ENCODE measurements at regions of chr10 and their contacts with region 1.

Region 1: DNA sequence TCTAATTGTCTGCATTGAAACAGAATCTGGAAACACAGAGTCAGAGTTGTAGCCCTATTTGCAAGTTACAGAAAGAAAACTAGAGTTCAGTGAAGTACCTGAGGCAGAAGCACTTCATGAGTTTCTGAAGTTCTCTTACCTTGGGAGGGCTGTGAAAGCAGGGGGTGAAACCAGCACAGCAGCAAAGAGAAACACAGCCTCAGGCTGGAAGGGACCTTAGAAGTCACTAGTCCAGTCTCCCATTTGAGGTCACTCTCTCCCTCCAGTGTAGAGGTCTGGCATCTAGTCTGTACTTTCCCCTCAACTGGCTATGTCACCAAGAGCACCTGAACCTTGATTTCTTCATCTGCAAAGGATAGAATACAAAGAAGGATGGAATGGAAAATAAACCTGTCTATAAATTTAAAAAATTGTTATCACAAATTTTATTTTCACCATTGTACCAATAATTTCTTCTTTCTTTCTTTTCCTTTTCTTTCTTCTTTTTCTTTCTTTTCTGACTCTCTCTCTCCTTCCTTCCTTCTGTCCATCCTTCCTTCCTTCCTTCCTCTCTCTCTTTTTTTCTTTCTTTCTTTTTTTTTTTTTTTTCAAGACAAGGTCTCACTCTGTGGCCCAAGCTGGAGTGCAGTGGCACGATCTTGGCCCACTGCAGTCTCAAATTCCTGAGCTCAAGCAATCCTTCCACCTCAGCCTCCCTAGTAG is 36.5 kb upstream of the SORBS1 start:
- DNase-seq: no peak

Region 2: GRCh38 chr10:95208702-95209391 is 388.8 kb before region 1 on chr10:
- in situ Hi-C with region 1: no loop called
- DNase-seq: peak; percentile 37

Region 3: GRCh38 chr10:95430231-95430951 is 167.2 kb before region 1 on chr10:
- in situ Hi-C with region 1: loop called (anchors 10 kb)
- DNase-seq: peak; percentile 79

Measured in KBM-7 (cell line).